ENCODE measurements at regions of chr3 and their contacts with region 1.

Region 1: GRCh38 chr3:124676236-124676635 is 54.0 kb upstream of the UMPS start:
- DNase-seq: no peak
- H3K4me3 ChIP-seq: no peak overlapping the region
- H3K27ac ChIP-seq: no peak overlapping the region
- H3K4me1 ChIP-seq: no peaks in the 10 kb centered on the region
- H3K27me3 ChIP-seq: no peaks in the 10 kb centered on the region
- CTCF ChIP-seq: no peak
- POLR2A ChIP-seq: no peak

Region 2: DNA sequence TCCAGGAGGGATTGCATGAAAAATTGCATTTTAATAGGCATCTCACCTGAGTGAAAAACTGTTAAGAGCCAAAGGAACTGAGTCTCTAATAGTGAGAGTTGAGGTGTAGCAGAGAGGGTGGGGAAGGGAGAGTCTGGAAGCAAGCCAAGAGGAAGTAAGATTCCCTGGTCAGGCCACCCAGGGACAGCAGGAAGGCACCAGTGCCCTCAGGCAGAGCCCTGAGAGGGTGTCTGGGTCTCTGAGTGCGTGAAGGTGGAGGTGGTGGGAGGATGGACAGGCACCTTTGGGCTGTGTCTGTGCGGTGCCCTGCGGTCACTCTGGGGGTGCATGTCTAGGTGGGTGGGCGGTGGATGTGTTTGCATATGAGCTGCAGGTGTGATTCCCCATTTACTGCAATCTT is 383.9 kb before region 1 on chr3:
- intact Hi-C with region 1: loop called (anchors 5 kb)
- DNase-seq: no peak
- H3K4me3 ChIP-seq: no peak overlapping the region
- H3K27ac ChIP-seq: no peak overlapping the region
- H3K4me1 ChIP-seq: peaks cover 0 to 4% of the 10 kb centered on the region in 2 donors
- H3K27me3 ChIP-seq: no peaks in the 10 kb centered on the region
- CTCF ChIP-seq: no peak
- POLR2A ChIP-seq: no peak